Ascending aorta (tissue), 2 donors: ENCODE measurements at regions of chr2 and their contacts with region 1.

Region 1: GRCh38 chr2:51995293-51995692 is 963.4 kb upstream of the NRXN1 start:
- DNase-seq: no peak
- H3K4me3 ChIP-seq: no peak overlapping the region
- H3K27ac ChIP-seq: no peak overlapping the region
- H3K4me1 ChIP-seq: peaks cover 0 to 4% of the 10 kb centered on the region in 2 donors
- H3K27me3 ChIP-seq: no peaks in the 10 kb centered on the region
- CTCF ChIP-seq: no peak

Region 2: DNA sequence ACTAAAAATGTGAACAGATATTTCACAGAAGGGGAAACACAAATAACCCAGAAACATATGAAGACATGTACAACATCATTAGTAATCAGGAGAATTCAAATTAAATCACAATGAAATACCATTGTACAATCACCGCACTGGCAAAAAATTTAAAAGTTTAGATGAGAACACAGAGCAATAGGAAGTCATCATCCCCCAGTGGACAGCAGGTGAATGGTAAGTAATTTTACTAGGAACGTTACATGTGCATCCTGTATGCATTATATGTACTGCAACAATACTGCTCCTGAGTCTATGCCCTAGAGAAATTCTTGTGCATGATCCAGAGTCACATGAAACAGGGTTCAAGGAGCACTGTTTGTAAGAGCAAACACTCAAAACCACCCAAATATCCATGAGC is 1677.1 kb before region 1 on chr2:
- intact Hi-C with region 1: no loop called
- DNase-seq: no peak
- H3K4me3 ChIP-seq: no peak overlapping the region
- H3K27ac ChIP-seq: no peak overlapping the region
- H3K4me1 ChIP-seq: no peaks in the 10 kb centered on the region
- H3K27me3 ChIP-seq: no peaks in the 10 kb centered on the region
- CTCF ChIP-seq: no peak

Region 3: GRCh38 chr2:51905458-51905857 is 89.8 kb before region 1 on chr2:
- intact Hi-C with region 1: no loop called
- DNase-seq: no peak
- H3K4me3 ChIP-seq: no peak overlapping the region
- H3K27ac ChIP-seq: no peak overlapping the region
- H3K4me1 ChIP-seq: no peaks in the 10 kb centered on the region
- H3K27me3 ChIP-seq: no peaks in the 10 kb centered on the region
- CTCF ChIP-seq: no peak

Region 4: GRCh38 chr2:51919395-51919794 is 75.9 kb before region 1 on chr2:
- intact Hi-C with region 1: loop called (anchors 5 kb)
- DNase-seq: no peak
- H3K4me3 ChIP-seq: no peak overlapping the region
- H3K27ac ChIP-seq: no peak overlapping the region
- H3K4me1 ChIP-seq: no peaks in the 10 kb centered on the region
- H3K27me3 ChIP-seq: no peaks in the 10 kb centered on the region
- CTCF ChIP-seq: no peak

Region 5: GRCh38 chr2:51960841-51961335 is 34.4 kb before region 1 on chr2:
- intact Hi-C with region 1: no loop called
- DNase-seq: no peak
- H3K4me3 ChIP-seq: no peak overlapping the region
- H3K27ac ChIP-seq: no peak overlapping the region
- H3K4me1 ChIP-seq: no peaks in the 10 kb centered on the region
- H3K27me3 ChIP-seq: no peaks in the 10 kb centered on the region
- CTCF ChIP-seq: no peak